Right ventricle myocardium inferior (tissue), 1 donor: ENCODE measurements at regions of chr7 and their contacts with region 1.

Region 1: DNA sequence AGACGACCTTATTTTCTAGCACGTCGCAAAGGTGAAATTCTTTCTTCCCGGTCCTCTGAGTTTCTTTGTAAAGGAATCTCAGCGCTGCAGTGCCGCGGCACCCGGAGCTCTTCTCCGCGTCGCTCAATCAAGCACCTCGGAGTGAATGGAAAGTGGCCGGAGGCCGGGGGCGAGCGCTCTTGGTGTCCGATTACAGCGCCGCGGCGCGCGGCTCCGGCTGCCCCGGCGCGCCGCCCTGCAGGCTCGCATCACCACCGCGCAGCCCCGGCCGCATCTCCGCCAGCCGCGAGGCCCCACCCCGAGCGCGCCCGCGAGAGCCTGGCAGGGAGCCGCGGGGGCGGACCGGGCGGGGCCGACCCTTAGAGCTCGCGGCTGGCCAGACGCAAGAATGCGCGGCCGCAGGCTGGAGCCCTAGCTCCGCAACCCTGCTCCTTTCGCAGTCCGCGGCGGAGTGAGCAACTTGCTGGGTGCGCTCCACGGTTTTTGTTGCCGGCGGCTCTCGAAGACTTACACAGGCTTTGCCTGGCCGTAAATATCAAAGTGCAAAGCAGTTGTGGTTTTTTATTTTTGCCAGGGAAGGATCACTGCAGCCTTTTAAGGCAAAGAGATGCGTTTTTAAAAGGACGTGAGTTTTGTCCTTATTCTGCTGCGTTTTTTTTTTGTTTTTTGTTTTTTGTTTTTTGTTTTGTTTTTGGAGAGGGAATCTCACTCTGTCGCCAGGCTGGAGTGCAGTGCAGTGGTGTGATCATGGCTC is at the start of gene SEMA3C:
- DNase-seq: peak; percentile 95
- ATAC-seq: peak; percentile 98
- total RNA-seq, gene SEMA3C: 67.8 TPM

Region 2: GRCh38 chr7:80699045-80699638 is 219.9 kb before region 1 on chr7:
- intact Hi-C with region 1: loop called (anchors 2 kb)
- DNase-seq: no peak
- ATAC-seq: peak; percentile 69

Region 3: DNA sequence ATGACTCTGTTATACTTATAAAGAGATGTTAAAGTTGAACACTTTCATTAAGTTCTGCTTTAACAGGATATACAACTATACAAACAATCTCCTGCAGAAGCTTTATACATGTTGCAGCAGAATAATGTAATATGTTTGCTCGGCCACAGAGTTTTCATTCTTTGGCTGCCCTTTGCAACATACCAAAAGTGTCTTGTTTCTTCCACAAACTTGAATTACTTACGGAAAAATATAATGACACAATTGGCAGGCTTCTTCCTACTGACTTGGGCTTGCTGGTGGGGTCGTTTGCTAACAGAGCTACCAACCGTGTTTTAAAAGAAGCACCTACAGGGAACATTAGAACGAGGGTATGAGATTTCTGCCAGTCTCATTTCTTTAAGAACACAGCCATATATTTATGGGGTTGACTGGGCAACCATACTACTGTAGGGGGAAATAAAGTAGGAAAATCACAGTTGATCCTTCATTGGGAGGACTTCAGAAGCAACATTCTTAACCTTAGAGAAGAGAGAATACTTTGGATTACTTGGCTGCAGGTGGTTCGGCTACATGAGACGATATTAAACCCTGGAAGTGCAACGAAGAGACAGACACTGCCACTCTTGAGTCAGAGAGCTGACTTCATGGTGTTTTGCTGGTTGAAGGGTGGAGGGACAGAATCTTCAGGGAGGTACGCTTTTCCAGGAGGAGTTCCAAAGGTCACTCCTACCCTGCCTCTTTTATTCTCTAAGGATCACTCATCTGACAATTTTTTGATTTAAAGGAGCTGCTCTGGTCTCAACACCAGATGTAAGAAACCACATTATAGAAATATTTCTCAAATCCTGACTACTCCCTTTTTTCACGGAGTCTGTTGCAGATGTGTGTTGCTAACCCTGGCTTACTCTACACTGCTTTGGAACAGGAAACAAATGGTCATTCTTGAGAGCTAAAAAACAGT is 124.2 kb before region 1 on chr7:
- intact Hi-C with region 1: loop called (anchors 5 kb)
- DNase-seq: no peak
- ATAC-seq: peak; percentile 49

Region 4: DNA sequence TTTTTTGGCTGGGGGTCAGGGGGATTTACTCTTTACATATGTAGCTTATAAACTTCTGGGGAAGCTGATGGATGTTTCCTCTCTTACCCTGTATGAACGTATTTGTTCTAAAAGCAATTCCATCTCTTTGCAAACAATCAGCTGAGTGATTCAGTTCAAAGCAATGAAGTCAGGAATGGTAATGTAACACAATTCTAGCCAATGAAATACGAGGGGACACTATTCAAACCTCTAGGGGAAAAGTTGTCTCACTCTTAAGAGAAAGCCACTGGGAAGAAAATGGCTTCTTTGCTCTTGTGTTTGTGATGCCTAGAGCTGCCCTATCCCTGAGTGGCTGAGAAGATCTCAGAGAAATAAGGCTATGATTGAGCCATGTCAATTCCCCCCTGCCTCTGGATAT is 134.5 kb after region 1 on chr7:
- intact Hi-C with region 1: no loop called
- DNase-seq: no peak
- ATAC-seq: no peak

Region 5: GRCh38 chr7:81190997-81191768 is 272.1 kb after region 1 on chr7:
- intact Hi-C with region 1: loop called (anchors 1 kb)
- DNase-seq: no peak
- ATAC-seq: peak; percentile 84

Region 6: DNA sequence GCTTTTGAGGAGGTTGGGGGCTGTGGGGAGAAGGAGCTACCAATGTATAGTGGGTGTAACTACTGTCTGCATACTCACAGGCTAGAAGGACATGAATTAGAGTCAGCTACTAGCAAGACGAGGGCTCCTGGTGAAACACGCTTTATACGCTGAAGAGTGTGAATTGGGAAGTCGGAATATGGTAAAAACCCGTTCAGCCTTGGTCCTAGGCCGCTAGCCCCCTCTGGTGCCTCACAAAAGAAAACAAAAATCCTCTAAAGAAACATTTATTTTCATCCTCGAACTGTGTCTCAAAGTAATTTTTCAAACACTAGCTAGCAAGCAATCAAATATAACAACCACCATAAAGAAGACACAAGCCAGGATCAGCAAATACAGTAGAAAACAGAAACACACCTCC is 337.9 kb after region 1 on chr7:
- intact Hi-C with region 1: loop called (anchors 5 kb)
- DNase-seq: no peak
- ATAC-seq: peak; percentile 54

Region 7: DNA sequence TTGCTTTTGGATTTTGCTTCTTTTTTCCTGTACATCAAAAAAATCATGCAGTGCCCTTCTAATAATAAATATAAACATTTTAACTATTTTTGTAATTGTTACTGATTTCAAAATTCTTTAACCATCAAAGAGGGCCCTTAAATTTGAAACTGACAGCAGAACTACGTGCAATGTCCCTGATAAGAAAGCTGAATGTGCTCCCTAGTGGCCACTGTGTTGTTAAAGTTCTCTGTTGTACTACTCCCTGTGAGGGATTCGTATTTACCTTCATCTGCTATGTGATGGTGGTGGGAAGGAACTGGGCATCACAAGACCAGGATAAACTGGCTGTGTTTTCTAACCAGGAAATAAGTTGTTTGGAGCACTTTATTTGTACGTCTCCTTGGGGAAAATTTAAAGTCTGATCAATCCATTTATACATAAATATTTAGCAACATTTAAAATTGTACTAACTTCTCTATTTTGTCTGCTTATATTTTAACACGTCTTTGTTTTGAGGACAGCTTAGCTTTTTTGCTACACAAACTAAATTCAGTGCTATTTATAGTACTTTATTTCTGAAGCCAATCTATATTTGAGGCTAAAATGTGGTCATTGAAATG is 528.4 kb after region 1 on chr7:
- intact Hi-C with region 1: loop called (anchors 5 kb)
- DNase-seq: no peak
- ATAC-seq: no peak